ENCODE measurements at regions of chrX and their contacts with region 1.

Region 1: GRCh38 chrX:131633285-131633917 is 89.5 kb downstream of the OR13H1 start:
- DNase-seq: peak in 1 of 2 experiments; percentile 45
- H3K4me3 ChIP-seq: no peak overlapping the region
- H3K27ac ChIP-seq: no peak overlapping the region
- H3K4me1 ChIP-seq: no peaks in the 10 kb centered on the region
- H3K27me3 ChIP-seq: no peaks in the 10 kb centered on the region
- CTCF ChIP-seq: peak; percentile 96

Region 2: DNA sequence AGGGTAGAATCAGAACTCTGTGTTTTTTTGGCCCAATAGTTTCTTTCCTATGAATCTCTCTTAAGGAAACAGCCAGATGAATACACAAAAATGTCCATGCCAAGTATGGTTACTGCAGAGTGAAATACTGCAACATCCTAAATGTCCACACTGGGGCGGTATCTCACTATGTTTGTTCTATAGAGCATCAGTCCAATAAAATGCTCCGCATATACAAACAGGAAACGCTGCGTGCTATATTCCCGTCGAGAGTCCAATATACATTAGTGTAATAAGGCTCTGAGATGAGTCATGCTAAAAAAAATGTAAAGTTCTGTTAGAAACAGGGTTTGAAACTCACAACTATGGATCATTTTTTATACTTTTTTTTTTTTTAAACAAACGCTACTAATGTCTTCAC is 657.5 kb before region 1 on chrX:
- CTCF ChIA-PET with region 1: no interaction called
- POLR2A ChIA-PET with region 1: no interaction called
- intact Hi-C with region 1: loop called (anchors 1 kb)
- DNase-seq: peak; percentile 23 to 47
- H3K4me3 ChIP-seq: no peak overlapping the region
- H3K27ac ChIP-seq: no peak overlapping the region
- H3K4me1 ChIP-seq: no peaks in the 10 kb centered on the region
- H3K27me3 ChIP-seq: peaks cover 11% of the 10 kb centered on the region
- CTCF ChIP-seq: peak; percentile 80

Region 3: DNA sequence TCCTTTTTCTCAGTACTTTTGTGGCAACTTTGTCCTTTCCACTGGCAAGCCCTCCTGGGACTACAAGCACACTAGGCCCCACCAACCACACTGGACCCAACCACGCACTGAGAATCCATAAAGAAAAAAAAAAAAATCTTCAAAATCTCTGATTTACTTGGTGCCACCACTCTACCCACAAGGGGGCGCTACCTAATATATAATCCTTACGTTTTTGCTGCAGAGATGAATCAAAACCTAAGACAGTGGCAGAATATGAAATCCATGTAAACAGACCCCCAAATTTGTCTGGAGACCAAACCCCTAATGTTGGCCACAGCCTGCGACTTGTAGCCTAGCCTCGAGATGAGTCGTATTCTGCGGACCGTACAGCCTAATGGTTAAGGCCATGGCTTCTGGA is 638.7 kb before region 1 on chrX:
- CTCF ChIA-PET with region 1: no interaction called
- POLR2A ChIA-PET with region 1: no interaction called
- intact Hi-C with region 1: loop called (anchors 5 kb)
- DNase-seq: peak in 1 of 2 experiments; percentile 8
- H3K4me3 ChIP-seq: no peak overlapping the region
- H3K27ac ChIP-seq: no peak overlapping the region
- H3K4me1 ChIP-seq: no peaks in the 10 kb centered on the region
- H3K27me3 ChIP-seq: peaks cover 17% of the 10 kb centered on the region
- CTCF ChIP-seq: peak; percentile 77

Region 4: GRCh38 chrX:131262737-131263679 is 370.4 kb before region 1 on chrX:
- CTCF ChIA-PET with region 1: no interaction called
- POLR2A ChIA-PET with region 1: no interaction called
- intact Hi-C with region 1: loop called (anchors 2 kb)
- DNase-seq: peak in 1 of 2 experiments; percentile 45
- H3K4me3 ChIP-seq: no peak overlapping the region
- H3K27ac ChIP-seq: no peak overlapping the region
- H3K4me1 ChIP-seq: no peaks in the 10 kb centered on the region
- H3K27me3 ChIP-seq: no peaks in the 10 kb centered on the region
- CTCF ChIP-seq: peak; percentile 79

Region 5: GRCh38 chrX:131693359-131693758 is 60.0 kb after region 1 on chrX:
- CTCF ChIA-PET with region 1: no interaction called
- POLR2A ChIA-PET with region 1: no interaction called
- intact Hi-C with region 1: no loop called
- DNase-seq: no peak
- H3K4me3 ChIP-seq: no peak overlapping the region
- H3K27ac ChIP-seq: no peak overlapping the region
- H3K4me1 ChIP-seq: no peaks in the 10 kb centered on the region
- H3K27me3 ChIP-seq: no peaks in the 10 kb centered on the region
- CTCF ChIP-seq: no peak

Region 6: DNA sequence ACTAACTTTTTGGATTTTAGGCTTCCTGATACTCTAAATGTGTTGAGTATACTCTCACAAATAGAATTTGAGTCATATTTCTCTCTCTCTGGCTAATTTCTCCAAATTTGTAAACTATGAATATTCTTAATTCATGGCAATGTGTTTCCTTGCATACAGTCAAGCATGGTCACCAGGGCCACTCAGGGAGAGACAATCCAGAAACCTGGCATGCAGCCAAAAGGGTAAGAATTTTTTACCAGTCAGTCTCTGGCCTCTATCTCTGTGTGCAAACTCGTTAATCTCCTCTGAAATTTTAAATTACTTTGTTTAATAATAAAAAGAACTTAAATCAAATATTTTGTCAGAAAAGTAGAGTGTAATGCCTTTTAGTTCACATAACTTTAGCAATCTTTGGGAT is 90.2 kb after region 1 on chrX:
- CTCF ChIA-PET with region 1: no interaction called
- POLR2A ChIA-PET with region 1: no interaction called
- intact Hi-C with region 1: no loop called
- DNase-seq: no peak
- H3K4me3 ChIP-seq: no peak overlapping the region
- H3K27ac ChIP-seq: no peak overlapping the region
- H3K4me1 ChIP-seq: no peaks in the 10 kb centered on the region
- H3K27me3 ChIP-seq: no peaks in the 10 kb centered on the region
- CTCF ChIP-seq: no peak